ENCODE measurements at regions of chr7 and their contacts with region 1.

Region 1: DNA sequence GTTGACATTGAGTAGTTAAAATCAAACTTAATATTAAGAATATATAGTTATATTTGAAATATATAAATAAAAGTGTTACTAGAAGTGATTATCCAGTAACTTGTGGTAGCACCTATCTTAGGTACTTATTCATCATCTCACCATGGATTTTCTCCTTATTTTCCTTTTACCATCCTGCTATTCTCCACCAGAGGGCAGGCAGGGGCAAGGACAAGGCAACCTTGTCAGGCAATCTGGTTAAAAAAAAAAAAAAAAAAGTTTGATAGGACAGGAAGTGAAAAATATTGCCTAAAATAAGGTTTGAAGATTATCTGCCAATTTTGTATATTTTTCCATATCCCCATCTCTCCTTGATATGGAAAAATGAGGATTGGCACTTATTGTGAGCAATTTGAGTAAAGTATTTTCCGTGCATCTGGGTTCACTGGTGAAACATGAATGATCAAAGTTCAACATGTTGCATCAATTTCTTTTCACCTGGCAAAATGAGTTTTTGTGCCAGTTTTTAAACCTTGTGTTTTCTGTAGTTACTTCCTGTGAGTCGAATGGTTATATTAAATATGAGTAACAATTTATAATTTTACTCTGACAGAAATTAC is 256.7 kb downstream of the AGMO start:
- DNase-seq: peak; percentile 16 to 53
- ATAC-seq: no peak
- H3K4me3 ChIP-seq: no peak overlapping the region
- H3K27ac ChIP-seq: no peak overlapping the region
- H3K4me1 ChIP-seq: no peaks in the 10 kb centered on the region
- H3K27me3 ChIP-seq: no peaks in the 10 kb centered on the region
- CTCF ChIP-seq: peak; percentile 50 to 83 (median 76)

Region 2: GRCh38 chr7:15370441-15370840 is 65.3 kb after region 1 on chr7:
- intact Hi-C with region 1: no loop called
- DNase-seq: no peak
- ATAC-seq: no peak
- H3K4me3 ChIP-seq: no peak overlapping the region
- H3K27ac ChIP-seq: no peak overlapping the region
- H3K4me1 ChIP-seq: no peaks in the 10 kb centered on the region
- H3K27me3 ChIP-seq: no peaks in the 10 kb centered on the region
- CTCF ChIP-seq: no peak

Region 3: GRCh38 chr7:15891151-15891881 is 586.2 kb after region 1 on chr7:
- intact Hi-C with region 1: loop called in 1 of 10 experiments (anchors 10 kb)
- DNase-seq: no peak
- ATAC-seq: no peak
- H3K4me3 ChIP-seq: no peak overlapping the region
- H3K27ac ChIP-seq: no peak overlapping the region
- H3K4me1 ChIP-seq: peaks cover 0 to 13% (median 0%) of the 10 kb centered on the region in 9 donors
- H3K27me3 ChIP-seq: no peaks in the 10 kb centered on the region
- CTCF ChIP-seq: no peak